GM10248 (cell line): ENCODE measurements at regions of chr15 and their contacts with region 1.

Region 1: GRCh38 chr15:20356444-20356910 is 185.1 kb downstream of the GOLGA6L6 start:
- DNase-seq: peak; percentile 87
- CTCF ChIP-seq: peak; percentile 100

Region 2: GRCh38 chr15:20344601-20345400 is 11.7 kb before region 1 on chr15:
- CTCF ChIA-PET with region 1: interaction called, 51 read pairs
- POLR2A ChIA-PET with region 1: no interaction called
- DNase-seq: peak; percentile 29
- CTCF ChIP-seq: no peak

Region 3: DNA sequence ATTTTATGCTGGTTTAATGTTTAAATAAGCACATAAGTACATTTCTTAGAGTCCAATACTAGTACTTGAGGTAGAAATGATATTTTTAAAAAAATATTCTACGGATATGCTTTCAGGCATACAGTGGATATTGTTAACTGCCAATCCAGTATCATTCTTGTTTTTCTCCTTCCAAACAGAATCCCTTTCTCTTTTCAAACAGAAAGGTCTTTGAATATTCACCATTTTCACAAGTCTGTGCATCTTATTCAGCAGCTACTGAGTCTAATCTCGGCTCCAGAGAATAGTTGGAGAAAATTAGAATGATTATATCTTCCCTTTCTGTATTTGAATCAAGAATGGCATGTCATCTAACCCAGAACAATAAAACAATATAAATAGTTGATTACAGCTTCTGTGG is 10.6 kb after region 1 on chr15:
- CTCF ChIA-PET with region 1: interaction called, 48 read pairs
- POLR2A ChIA-PET with region 1: no interaction called
- DNase-seq: no peak
- CTCF ChIP-seq: no peak

Region 4: DNA sequence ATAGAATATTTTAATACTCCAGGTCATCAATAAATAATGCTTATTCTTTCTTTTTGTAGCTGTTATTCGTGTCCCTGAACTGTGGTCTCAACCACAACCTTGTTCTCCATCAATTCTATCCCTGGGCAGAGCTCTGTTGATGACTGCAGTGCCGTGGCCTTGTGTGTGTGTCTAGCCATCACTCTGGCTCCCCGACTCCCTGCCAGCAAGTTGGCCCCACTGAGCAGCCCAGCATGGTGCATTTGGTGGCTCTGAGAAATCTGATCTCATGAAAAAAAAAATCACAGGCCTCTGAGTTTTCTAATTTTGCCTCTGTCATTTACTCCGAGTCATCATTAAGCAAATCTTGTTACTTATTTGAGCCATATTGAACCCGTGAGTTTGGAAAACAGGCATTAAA is 20.4 kb after region 1 on chr15:
- CTCF ChIA-PET with region 1: interaction called, 29 read pairs
- POLR2A ChIA-PET with region 1: no interaction called
- DNase-seq: no peak
- CTCF ChIP-seq: no peak

Region 5: DNA sequence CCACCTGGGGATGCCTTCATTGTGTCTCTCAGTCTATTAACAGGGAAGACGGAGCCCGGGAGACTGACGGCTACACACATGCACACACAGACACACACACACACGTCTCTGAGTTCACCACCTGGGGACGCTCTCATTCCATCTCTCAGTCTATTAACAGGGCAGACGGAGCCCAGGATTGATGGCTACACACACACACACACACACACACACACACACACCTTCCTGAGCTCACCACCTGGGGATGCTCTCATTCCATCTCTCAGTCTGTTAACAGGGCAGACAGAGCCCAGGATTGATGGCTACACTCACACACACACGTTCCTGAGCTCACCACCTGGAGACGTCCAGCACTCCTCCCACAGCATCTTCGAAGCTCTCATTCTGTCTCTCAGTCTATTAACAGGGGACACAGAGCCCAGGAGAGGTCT is 1867.8 kb after region 1 on chr15:
- CTCF ChIA-PET with region 1: interaction called, 230 read pairs
- POLR2A ChIA-PET with region 1: no interaction called
- DNase-seq: no peak
- CTCF ChIP-seq: peak; percentile 7